Motor neuron (in vitro differentiated cells): ENCODE measurements at regions of chr9 and their contacts with region 1.

Region 1: DNA sequence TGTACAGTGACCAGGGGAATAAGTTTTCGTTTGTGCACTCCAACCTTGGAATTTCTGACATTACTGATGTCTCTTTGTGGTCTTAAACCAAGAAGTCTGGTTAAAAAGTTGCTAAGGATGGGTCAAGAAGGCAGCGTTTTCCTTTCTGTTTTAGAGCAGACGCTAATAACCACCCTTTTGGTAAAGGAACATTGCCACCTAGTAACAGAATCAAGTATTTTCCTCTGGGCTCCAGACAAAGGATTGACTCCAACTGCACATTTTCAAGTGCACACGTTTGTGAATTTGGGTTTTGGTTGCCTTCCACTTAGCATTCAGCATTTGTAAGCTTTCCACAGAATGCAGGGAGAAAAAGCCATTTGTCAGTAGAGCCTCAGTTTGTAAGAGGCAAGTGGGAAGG is 22.2 kb upstream of the CEP78 start:
- ATAC-seq: peak in 6 of 8 experiments; percentile 47 to 92 (median 70)
- H3K4me3 ChIP-seq: no peak overlapping the region
- H3K27ac ChIP-seq: no peak overlapping the region
- H3K4me1 ChIP-seq: no peaks in the 10 kb centered on the region

Region 2: GRCh38 chr9:77977210-77977611 is 236.5 kb before region 1 on chr9:
- in situ Hi-C with region 1: loop called in 1 of 9 experiments (anchors 25 kb)
- ATAC-seq: peak; percentile 21 to 72 (median 48)
- H3K4me3 ChIP-seq: no peak overlapping the region
- H3K27ac ChIP-seq: no peak overlapping the region
- H3K4me1 ChIP-seq: peaks cover 0 to 4% of the 10 kb centered on the region in 2 donors

Region 3: DNA sequence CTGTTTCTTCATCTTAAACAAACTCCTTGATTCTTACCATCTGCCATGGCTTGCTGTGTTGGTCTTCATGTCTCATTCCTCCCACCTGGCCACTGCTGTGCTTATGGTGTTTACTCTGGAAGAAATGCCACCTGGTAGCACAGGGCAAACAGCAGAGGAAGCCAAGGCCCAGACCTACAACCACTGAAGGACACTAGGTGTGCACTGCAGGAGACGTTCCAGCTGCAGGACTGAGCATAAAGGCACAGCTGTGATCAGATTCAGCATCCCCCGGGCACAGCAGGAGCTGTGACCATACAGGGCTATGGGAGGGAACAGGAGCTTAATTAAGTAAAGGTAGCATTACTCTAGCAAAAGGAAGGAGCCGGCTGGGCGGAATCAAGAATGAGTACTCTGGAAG is 169.5 kb before region 1 on chr9:
- in situ Hi-C with region 1: no loop called
- ATAC-seq: no peak
- H3K4me3 ChIP-seq: no peak overlapping the region
- H3K27ac ChIP-seq: no peak overlapping the region
- H3K4me1 ChIP-seq: no peaks in the 10 kb centered on the region

Region 4: DNA sequence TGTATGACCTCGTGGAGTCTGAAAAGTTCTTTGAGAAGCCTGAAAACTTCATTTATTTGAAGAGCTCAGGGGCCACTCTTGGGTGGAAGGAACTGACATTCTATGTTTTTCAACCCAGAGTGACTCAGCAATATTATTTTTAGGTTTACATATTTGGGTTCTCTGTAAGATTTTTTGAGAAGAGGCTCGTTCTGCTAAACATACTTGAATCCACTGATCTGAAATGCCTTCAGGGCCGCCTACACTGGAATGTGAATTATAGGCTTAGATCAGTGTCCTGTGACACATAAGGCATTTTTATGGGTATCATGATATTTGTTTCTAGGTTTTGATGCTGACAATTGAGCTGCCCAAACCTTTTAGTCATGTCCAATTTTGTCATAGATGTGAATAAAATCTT is 169.4 kb after region 1 on chr9:
- in situ Hi-C with region 1: no loop called
- ATAC-seq: peak in 2 of 8 experiments; percentile 59 to 70
- H3K4me3 ChIP-seq: no peak overlapping the region
- H3K27ac ChIP-seq: no peak overlapping the region
- H3K4me1 ChIP-seq: peaks cover 9 to 24% of the 10 kb centered on the region in 2 donors